ENCODE measurements at regions of chr6 and their contacts with region 1.

Region 1: DNA sequence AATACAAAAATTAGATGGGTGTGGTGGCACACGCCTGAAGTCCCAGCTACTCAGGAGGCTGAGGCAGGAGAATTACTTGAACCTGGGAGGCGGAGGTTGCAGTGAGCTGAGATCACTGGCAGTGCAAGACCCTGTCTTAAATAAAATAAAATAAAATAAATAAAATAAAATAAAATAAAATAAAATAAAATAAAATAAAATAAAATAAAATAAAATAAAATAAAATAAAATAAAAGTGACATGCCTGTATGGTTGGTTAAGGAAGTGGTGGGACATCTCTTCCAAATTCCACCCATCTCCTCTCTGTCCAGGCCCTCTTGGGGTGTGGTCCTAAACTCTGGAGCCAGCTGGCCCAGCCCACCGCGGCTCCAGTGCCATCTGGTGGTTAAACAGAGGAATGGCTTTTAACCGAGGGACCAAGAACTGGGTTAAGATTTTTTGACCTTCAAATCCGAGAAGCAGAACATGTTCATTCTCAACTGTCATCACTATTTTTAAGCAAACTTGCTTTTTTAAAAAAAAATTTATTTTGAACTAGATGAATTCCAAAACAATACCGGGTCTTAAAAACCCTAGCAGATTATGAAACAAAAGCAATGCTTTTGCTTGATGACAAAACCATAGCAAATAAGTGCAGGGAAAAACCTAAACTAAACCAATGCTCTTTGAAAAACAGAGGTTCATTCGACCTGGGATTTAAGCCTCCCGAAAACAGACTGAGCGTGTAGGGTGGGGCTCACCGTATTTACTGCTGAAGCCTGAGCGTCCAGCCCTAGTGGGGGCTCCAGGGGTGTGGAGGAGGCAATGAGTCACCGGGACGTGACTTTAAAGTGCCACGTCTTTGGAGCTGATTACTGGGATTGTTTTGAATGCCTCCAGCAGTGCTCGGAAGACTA is 68.8 kb downstream of the CDC5L start:
- DNase-seq: peak in 1 of 2 donors; percentile 65
- ATAC-seq: peak; percentile 74 to 86 (median 78)
- H3K4me3 ChIP-seq: peak overlapping the region; percentile 38
- H3K27ac ChIP-seq: no peak overlapping the region
- H3K4me1 ChIP-seq: peaks cover 5% of the 10 kb centered on the region
- H3K27me3 ChIP-seq: no peaks in the 10 kb centered on the region
- CTCF ChIP-seq: peak; percentile 88

Region 2: DNA sequence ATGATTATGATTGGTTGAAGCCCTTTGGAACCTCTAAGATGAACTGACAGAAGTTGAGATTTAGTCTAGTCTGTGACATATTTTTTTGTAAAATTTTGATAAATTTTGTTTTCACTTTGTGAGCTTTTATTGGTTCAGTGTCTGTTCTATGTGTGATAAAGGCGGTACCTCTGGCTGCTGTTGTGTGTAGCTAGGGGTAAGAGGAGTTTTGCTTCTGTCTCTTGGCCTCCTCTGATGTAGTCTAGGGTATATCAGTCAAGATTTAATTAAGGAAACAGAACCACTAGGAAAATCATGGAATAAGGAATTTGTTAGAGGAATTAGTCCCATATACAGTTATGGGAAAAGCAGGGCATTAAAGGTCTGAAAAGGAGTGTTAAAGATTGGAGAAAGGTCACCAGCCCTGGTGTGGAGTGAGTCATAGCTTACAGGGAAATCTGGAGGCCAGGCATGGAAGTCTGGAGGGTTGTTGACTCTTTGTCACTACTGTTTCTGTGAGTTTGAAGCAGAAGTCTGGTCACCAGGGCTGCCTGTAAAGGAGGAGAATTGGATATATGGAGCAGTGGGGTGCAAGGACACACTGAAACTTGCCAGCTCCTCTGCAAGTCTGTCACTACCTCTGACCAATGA is 40.3 kb before region 1 on chr6:
- intact Hi-C with region 1: loop called in 1 of 2 experiments (anchors 5 kb)
- DNase-seq: no peak
- ATAC-seq: peak; percentile 54 to 74 (median 71)
- H3K4me3 ChIP-seq: no peak overlapping the region
- H3K27ac ChIP-seq: peak overlapping the region; percentile 47
- H3K4me1 ChIP-seq: peaks cover 22% of the 10 kb centered on the region
- H3K27me3 ChIP-seq: no peaks in the 10 kb centered on the region
- CTCF ChIP-seq: no peak

Region 3: DNA sequence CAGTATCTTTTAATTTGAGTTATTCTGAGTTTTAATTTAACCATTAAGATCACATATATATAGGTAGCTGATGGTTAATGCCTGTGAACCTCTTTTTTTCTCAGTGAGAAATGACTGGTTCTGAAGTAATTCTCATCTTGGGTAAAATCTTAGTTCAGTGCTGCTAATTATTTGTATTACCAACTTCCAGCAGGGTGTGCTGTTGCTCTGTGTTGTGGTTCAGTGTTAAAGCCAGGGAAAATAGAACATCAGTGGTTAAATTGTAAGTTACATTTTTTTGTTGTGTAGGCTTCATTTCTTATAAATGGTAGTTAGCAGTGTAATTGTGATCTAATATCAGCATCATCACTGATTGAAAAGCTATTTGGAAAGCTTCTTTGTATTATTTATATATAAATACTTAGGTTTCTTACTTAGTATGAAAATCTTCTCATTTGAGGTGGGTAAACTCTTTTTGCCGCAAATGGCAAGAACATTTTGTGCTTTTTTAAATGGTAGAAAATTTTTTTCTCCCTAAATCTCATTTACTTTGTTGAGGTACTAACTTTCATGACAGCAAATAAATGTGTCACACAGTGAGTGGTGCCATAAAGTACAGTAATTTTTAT is 25.1 kb before region 1 on chr6:
- intact Hi-C with region 1: loop called in 1 of 2 experiments (anchors 1 kb)
- DNase-seq: peak in 1 of 2 donors; percentile 21
- ATAC-seq: peak; percentile 56 to 81 (median 75)
- H3K4me3 ChIP-seq: no peak overlapping the region
- H3K27ac ChIP-seq: peak overlapping the region; percentile 74
- H3K4me1 ChIP-seq: peaks cover 45% of the 10 kb centered on the region
- H3K27me3 ChIP-seq: no peaks in the 10 kb centered on the region
- CTCF ChIP-seq: peak; percentile 81